Left colon (tissue), 2 donors: ENCODE measurements at regions of chr19 and their contacts with region 1.

Region 1: GRCh38 chr19:44954824-44955586 is at the start of gene CLPTM1:
- DNase-seq: peak; percentile 97
- ATAC-seq: peak; percentile 94
- total RNA-seq, gene CLPTM1: 113 to 129 TPM

Region 2: DNA sequence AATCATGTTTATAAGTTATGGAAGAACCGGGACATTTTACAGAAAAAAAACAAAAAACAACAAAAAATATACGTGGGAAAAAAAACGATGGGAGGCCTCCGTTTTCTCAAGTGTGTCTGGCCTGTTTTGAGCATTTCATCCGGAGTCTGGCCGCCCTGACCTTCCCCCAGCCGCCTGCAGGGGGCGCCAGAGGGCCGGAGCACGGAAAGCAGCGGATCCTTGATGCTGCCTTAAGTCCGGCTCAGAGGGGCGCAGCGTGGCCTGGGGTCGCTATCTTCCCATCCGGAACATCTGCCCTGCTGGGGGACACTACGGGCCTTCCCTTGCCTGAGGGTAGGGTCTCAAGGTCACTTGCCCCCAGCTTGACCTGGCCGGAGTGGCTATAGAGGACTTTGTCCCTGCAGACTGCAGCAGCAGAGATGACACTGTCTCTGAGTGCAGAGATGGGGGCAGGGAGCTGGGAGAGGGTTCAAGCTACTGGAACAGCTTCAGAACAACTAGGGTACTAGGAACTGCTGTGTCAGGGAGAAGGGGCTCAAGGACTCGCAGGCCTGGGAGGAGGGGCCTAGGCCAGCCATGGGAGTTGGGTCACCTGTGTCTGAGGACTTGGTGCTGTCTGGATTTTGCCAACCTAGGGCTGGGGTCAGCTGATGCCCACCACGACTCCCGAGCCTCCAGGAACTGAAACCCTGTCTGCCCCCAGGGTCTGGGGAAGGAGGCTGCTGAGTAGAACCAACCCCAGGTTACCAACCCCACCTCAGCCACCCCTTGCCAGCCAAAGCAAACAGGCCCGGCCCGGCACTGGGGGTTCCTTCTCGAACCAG is 51.2 kb before region 1 on chr19:
- intact Hi-C with region 1: loop called (anchors 2 to 10 kb)
- DNase-seq: peak in 1 of 2 donors; percentile 77
- ATAC-seq: peak; percentile 70